ENCODE measurements at regions of chr4 and their contacts with region 1.

Region 1: DNA sequence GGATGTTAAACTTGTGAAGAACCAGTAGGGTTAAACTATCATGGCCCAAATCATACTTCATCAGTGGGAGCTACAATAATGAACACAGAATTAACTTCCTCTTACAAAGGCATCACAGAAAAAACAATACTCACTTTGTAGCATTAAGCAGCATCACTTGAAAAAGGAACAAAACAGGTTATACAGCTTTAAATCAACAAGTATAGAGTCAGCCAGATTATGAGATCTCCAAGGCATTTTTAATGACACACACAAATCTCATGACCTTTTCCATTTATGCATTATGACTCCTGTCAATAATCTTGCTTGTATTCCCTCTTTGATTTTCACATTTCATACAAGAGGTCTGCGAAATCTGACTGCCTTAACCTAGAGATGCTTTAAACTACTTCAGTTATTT is 18.3 kb downstream of the FBXL5 start:
- DNase-seq: no peak
- H3K4me3 ChIP-seq: no peak overlapping the region
- H3K27me3 ChIP-seq: no peaks in the 10 kb centered on the region
- CTCF ChIP-seq: no peak

Region 2: GRCh38 chr4:15657366-15657765 is 20.5 kb after region 1 on chr4:
- CTCF ChIA-PET with region 1: interaction called, 3 read pairs
- POLR2A ChIA-PET with region 1: interaction called, 17 read pairs
- DNase-seq: no peak
- H3K4me3 ChIP-seq: no peak overlapping the region
- H3K27me3 ChIP-seq: no peaks in the 10 kb centered on the region
- CTCF ChIP-seq: no peak

Measured in BJ (cell line).